SK-N-SH (cell line): ENCODE measurements at regions of chr15 and their contacts with region 1.

Region 1: GRCh38 chr15:42920519-42921227 is at the start of gene TTBK2:
- DNase-seq: peak; percentile 95
- H3K4me3 ChIP-seq: peak within 1 kb of the TSS; percentile 77 to 85
- H3K27ac ChIP-seq: peak within 1 kb of the TSS; percentile 54 to 75
- H3K4me1 ChIP-seq: peaks cover 0 to 4% of the 10 kb centered on the region in 2 experiments; a peak in 2 of 4 replicates
- H3K27me3 ChIP-seq: no peaks in the 10 kb centered on the region
- CTCF ChIP-seq: no peak
- EP300 ChIP-seq: no peak; a peak in 1 of 4 replicates
- RAD21 ChIP-seq: no peak
- polyA plus RNA-seq, gene TTBK2: 4.5 and 6.4 TPM in 2 replicates

Region 2: DNA sequence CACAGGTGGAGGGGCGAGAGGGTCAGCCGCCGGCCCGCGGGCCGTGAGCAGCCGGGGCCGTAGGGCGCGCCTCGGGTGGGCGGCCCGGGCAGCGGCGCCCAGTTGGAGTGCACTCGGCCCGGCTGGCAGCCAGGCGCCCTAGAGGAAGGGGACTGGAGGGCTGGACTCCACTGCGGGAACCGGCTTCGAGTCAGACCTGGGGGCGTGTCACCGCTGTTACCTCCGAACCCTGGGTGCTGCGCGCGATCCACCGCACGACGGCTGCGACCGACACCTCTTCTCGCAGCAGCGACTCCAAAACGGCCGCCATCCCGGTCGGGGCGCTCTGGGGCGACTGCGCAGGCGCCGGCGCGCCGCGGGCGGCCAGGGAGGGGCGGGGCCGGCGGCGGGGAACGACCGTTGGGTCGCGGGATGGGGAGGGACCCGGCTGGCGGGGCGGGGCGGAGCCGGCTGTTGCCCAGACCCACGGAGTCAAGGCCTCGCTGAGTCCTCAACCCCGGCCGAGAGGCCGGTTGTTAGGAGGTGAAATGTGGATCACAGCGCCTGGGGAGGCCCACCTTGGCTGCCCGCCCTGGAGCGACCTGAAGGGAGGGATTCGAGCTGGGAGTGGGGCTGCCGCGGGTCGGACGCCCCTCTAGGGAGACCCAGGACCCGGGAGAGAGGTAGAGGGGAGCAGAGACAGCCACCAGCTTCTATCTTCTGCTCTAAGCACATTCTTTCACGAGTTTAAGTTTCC is 183.7 kb before region 1 on chr15 and contains the start of gene CDAN1:
- CTCF ChIA-PET with region 1: interaction called, 15 read pairs
- POLR2A ChIA-PET with region 1: no interaction called
- DNase-seq: peak; percentile 100
- H3K4me3 ChIP-seq: peak within 1 kb of the TSS; percentile 88 to 89
- H3K27ac ChIP-seq: peak within 1 kb of the TSS; percentile 78 to 86
- H3K4me1 ChIP-seq: peaks cover 0 to 28% of the 10 kb centered on the region in 2 experiments; a peak in 2 of 4 replicates
- H3K27me3 ChIP-seq: no peaks in the 10 kb centered on the region
- CTCF ChIP-seq: no peak
- EP300 ChIP-seq: no peak
- RAD21 ChIP-seq: no peak
- polyA plus RNA-seq, gene CDAN1: 6.2 and 9.7 TPM in 2 replicates

Region 3: GRCh38 chr15:42937143-42937542 is 16.5 kb after region 1 on chr15:
- CTCF ChIA-PET with region 1: interaction called, 20 read pairs
- POLR2A ChIA-PET with region 1: no interaction called
- DNase-seq: no peak
- H3K4me3 ChIP-seq: no peak overlapping the region
- H3K27ac ChIP-seq: no peak overlapping the region
- H3K4me1 ChIP-seq: no peaks in the 10 kb centered on the region
- H3K27me3 ChIP-seq: no peaks in the 10 kb centered on the region
- CTCF ChIP-seq: no peak
- EP300 ChIP-seq: no peak
- RAD21 ChIP-seq: no peak